GM12878 (cell line): ENCODE measurements at regions of chr10 and their contacts with region 1.

Region 1: GRCh38 chr10:102399217-102400089 is 3.9 kb downstream of the NFKB2 start:
- DNase-seq: peak; percentile 56
- ATAC-seq: peak; percentile 66
- H3K4me3 ChIP-seq: peak overlapping the region; percentile 67
- H3K27ac ChIP-seq: peak overlapping the region; percentile 37
- H3K4me1 ChIP-seq: peaks cover 20% of the 10 kb centered on the region
- H3K27me3 ChIP-seq: no peaks in the 10 kb centered on the region
- CTCF ChIP-seq: peak; percentile 88 to 94 (median 88)
- EP300 ChIP-seq: no peak
- POLR2A ChIP-seq: peak; percentile 86
- RAD21 ChIP-seq: peak; percentile 61

Region 2: DNA sequence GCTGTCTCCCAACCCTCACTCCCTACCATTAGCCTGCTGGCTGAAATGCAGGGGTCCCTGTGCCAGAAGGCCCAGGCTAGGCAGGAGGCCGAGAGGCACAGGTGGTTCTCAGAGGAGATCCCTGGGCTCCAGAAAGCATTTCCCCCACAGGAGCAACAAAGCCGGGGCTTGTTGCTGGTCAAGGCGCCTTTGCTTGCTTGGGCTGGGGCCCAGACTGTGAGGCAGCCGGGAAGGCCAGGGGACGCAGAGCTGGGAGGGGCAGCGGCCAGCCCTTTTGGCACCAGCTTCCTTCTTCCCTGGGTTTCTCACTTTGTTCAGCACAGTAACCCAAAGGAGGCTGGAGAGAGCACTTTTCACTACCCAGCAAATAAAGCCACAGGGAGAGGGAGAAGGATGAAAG is 753.1 kb before region 1 on chr10:
- CTCF ChIA-PET with region 1: no interaction called
- POLR2A ChIA-PET with region 1: no interaction called
- RAD21 ChIA-PET with region 1: no interaction called
- SMC1A ChIA-PET with region 1: no interaction called
- in situ Hi-C with region 1: no loop called
- intact Hi-C with region 1: no loop called
- DNase-seq: no peak
- ATAC-seq: no peak
- H3K4me3 ChIP-seq: no peak overlapping the region
- H3K27ac ChIP-seq: no peak overlapping the region
- H3K4me1 ChIP-seq: no peaks in the 10 kb centered on the region
- H3K27me3 ChIP-seq: no peaks in the 10 kb centered on the region
- CTCF ChIP-seq: no peak
- EP300 ChIP-seq: no peak
- POLR2A ChIP-seq: no peak
- RAD21 ChIP-seq: no peak

Region 3: DNA sequence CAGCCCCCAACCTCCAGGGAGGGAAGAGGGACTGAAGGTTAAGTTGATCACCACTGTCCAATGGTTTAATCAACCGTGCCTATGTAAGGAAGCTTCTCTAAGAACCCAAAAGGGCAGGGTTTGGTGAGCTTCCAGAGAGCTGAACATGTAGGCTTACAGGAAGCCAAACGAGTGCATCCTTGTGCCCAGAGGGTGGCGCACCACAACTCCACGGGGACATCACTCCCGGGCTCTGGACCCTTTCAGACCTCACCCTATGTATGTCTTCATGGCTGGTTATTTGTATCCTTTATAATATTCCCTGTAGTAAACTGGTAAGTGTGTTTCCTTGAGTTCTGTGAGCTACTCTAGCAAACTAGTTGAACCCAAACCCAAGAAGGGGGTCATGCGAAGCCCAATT is 15.4 kb before region 1 on chr10:
- CTCF ChIA-PET with region 1: interaction called, 52 read pairs
- POLR2A ChIA-PET with region 1: interaction called, 12 read pairs
- RAD21 ChIA-PET with region 1: interaction called, 6 read pairs
- SMC1A ChIA-PET with region 1: no interaction called
- in situ Hi-C with region 1: no loop called
- intact Hi-C with region 1: no loop called
- DNase-seq: no peak
- ATAC-seq: peak; percentile 59
- H3K4me3 ChIP-seq: no peak overlapping the region
- H3K27ac ChIP-seq: no peak overlapping the region
- H3K4me1 ChIP-seq: peaks cover 13% of the 10 kb centered on the region
- H3K27me3 ChIP-seq: no peaks in the 10 kb centered on the region
- CTCF ChIP-seq: peak in 1 of 3 experiments; percentile 26; a peak in 3 of 6 replicates
- EP300 ChIP-seq: no peak
- POLR2A ChIP-seq: no peak
- RAD21 ChIP-seq: no peak